Ovary (tissue), 10 donors: ENCODE measurements at regions of chr2 and their contacts with region 1.

Region 1: DNA sequence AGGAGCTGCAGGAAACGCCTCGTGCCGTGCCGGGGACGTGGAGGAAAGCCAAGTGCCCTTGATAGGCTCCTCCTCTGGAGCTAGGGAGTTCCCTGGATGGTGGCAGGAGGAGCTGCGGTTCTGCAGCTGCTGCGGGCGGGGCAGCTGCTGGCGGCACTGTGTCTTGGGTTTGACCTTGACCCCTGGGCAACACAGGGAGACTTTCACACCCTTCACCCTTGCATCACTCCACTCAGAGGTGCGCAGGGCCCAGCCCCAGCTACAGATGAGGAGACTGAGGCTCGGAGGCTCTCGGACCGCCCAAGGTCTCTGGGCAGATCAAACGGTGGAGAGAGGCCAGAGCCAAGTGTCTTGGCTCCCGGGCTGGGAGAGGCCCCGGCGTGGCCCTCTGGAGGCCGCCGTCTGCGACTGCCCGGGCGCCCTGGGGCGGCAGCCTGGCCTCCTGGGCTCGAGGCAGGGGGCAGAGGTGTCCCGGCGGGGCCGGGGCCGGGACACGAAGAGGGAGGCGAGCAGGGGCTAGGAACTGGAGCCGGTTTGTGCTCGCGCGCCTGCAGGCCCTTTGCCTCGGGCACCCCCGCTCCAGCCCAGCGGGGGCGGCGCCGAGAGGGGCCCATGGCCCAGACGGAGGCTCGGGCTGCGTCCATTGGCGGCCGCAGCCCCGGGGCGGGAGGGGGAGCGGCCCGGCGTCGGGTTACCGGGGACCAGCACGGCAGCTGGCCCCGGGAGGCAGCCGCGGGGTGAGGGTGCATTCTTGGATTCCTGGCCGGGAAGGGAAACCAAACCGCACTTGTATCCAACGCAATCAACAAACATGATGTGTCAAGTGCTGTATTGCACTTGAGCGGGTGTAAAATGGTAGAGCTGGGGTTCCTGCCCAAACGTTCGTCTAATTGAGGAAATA is 129.6 kb upstream of the SLC1A4 start:
- DNase-seq: peak; percentile 86 to 92 (median 90)
- H3K4me3 ChIP-seq: peak overlapping the region; percentile 28
- H3K27ac ChIP-seq: peak overlapping the region; percentile 90 to 94
- H3K4me1 ChIP-seq: peaks cover 12% of the 10 kb centered on the region
- H3K27me3 ChIP-seq: no peaks in the 10 kb centered on the region
- CTCF ChIP-seq: peak in 1 of 3 donors; percentile 12
- EP300 ChIP-seq: no peak
- POLR2A ChIP-seq: no peak

Region 2: DNA sequence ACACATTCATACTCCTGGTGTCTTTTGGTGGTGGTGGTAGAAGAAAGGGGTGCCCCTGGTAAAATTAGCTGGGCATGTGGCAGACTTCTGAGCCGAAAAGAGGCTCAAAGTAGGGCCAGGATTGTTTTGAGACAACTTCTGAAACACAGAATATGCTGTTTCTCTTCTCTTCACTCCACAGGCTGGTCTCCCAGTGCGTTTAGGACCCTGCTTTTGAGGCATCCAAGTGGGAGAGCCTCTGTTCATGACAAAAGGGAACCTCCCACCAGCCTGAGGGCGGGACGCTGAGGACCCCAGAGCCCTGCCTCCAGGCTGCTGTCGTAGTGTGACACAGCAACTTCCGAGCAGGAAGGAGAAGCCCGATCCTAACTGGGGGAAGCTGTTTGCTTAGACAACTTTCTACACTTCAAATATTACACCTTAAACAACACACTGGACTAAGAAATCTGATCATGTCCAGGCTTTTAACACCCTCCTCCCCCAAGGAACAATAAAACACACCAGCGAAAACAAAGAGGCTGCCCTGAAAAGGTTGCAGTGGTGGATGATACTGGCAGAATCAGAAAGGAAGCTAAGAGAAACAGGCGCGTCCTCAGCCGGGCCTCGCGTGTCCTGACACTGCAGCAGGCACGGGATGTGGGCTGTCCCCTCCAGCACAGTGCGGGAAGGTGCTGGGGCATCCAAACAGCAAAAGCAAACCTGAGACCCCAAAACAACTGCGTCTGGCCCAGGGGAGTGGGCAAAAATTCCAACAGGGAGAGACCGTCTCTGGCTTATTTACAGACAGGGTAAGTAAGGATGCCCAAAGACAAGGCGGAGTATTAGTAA is 215.2 kb before region 1 on chr2:
- intact Hi-C with region 1: loop called in 2 of 4 experiments (anchors 2 to 5 kb)
- DNase-seq: peak; percentile 77 to 82 (median 80)
- H3K4me3 ChIP-seq: peak overlapping the region; percentile 46
- H3K27ac ChIP-seq: peak overlapping the region; percentile 53 to 88
- H3K4me1 ChIP-seq: peaks cover 23% of the 10 kb centered on the region
- H3K27me3 ChIP-seq: no peaks in the 10 kb centered on the region
- CTCF ChIP-seq: no peak
- EP300 ChIP-seq: no peak
- POLR2A ChIP-seq: peak; percentile 72

Region 3: GRCh38 chr2:64653349-64654062 is 206.1 kb before region 1 on chr2 and contains the start of gene SERTAD2:
- intact Hi-C with region 1: loop called in 2 of 4 experiments (anchors 2 to 5 kb)
- DNase-seq: peak; percentile 87 to 93 (median 91)
- H3K4me3 ChIP-seq: peak within 1 kb of the TSS; percentile 85
- H3K27ac ChIP-seq: peak within 1 kb of the TSS; percentile 94 to 98
- H3K4me1 ChIP-seq: peaks cover 9% of the 10 kb centered on the region
- H3K27me3 ChIP-seq: no peaks in the 10 kb centered on the region
- CTCF ChIP-seq: no peak
- EP300 ChIP-seq: no peak
- POLR2A ChIP-seq: peak; percentile 72
- total RNA-seq, gene SERTAD2: 11.0 to 26.8 (median 21.8) TPM

Region 4: GRCh38 chr2:64767670-64768468 is 91.7 kb before region 1 on chr2:
- intact Hi-C with region 1: loop called in 2 of 4 experiments (anchors 5 kb)
- DNase-seq: peak; percentile 89 to 93 (median 91)
- H3K4me3 ChIP-seq: peak overlapping the region; percentile 66
- H3K27ac ChIP-seq: peak overlapping the region; percentile 89 to 95
- H3K4me1 ChIP-seq: peaks cover 2% of the 10 kb centered on the region
- H3K27me3 ChIP-seq: no peaks in the 10 kb centered on the region
- CTCF ChIP-seq: no peak
- EP300 ChIP-seq: no peak
- POLR2A ChIP-seq: peak; percentile 88